HepG2 (cell line): ENCODE measurements at regions of chr4 and their contacts with region 1.

Region 1: GRCh38 chr4:25743971-25744370 is 88.3 kb downstream of the SLC34A2 start:
- DNase-seq: no peak
- ATAC-seq: no peak
- H3K4me3 ChIP-seq: no peak overlapping the region
- H3K27ac ChIP-seq: no peak overlapping the region
- H3K4me1 ChIP-seq: no peaks in the 10 kb centered on the region
- H3K27me3 ChIP-seq: no peaks in the 10 kb centered on the region; a peak in 1 of 5 replicates
- CTCF ChIP-seq: no peak
- EP300 ChIP-seq: no peak
- POLR2A ChIP-seq: no peak
- RAD21 ChIP-seq: no peak

Region 2: DNA sequence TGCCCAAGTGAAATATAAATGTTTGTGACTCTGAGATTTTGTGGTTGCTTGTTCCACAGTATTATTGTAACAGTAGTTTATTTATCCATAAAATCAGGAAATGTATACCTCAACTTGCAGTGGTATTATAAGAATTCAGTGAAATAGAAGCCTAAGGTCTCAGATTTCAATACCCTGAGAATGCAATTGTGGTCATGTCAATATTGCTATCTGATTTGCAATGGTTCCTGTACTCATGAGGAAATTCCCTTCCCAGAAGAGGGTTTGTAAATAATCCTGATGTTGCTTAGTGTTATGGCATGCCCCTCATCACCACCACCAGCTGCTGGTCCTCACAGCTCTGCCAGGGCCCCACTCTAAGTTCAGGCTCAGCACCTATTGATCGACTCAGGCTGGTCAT is 20.6 kb before region 1 on chr4:
- CTCF ChIA-PET with region 1: no interaction called
- POLR2A ChIA-PET with region 1: no interaction called
- in situ Hi-C with region 1: no loop called
- intact Hi-C with region 1: no loop called
- DNase-seq: no peak
- ATAC-seq: peak; percentile 47; the same call in 1 of the 3 replicates
- H3K4me3 ChIP-seq: no peak overlapping the region
- H3K27ac ChIP-seq: no peak overlapping the region
- H3K4me1 ChIP-seq: no peaks in the 10 kb centered on the region
- H3K27me3 ChIP-seq: no peaks in the 10 kb centered on the region
- CTCF ChIP-seq: no peak
- EP300 ChIP-seq: no peak
- POLR2A ChIP-seq: no peak
- RAD21 ChIP-seq: no peak

Region 3: DNA sequence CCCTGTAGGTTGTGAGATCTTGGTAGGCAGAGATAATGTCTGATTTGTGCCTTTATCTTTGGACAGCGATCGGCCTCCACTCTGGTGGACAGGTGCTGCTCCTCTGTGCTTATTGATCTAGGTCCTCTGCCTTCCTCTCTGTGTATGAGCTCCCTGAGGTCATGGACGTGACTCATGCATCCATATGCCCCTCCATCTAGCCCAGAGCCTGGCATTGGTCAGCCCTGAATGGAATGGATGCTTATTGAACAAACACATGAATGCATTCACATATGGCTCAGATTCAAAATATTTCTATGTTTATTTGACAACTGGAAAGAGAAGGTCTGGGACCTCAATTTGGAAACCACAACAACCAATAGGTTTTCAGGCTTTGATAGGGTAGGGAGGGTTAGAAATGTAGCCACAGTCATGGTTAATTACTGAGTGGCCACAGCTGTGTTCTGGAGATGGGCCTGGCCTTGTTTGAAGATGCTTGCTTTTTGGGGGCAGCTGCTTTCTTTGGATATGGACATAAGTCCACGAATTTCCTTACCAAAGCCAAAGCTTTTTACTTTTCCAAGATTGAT is 42.6 kb after region 1 on chr4:
- CTCF ChIA-PET with region 1: no interaction called
- POLR2A ChIA-PET with region 1: no interaction called
- in situ Hi-C with region 1: no loop called
- intact Hi-C with region 1: loop called (anchors 2 kb)
- DNase-seq: no peak
- ATAC-seq: no peak
- H3K4me3 ChIP-seq: no peak overlapping the region
- H3K27ac ChIP-seq: no peak overlapping the region
- H3K4me1 ChIP-seq: no peaks in the 10 kb centered on the region
- H3K27me3 ChIP-seq: no peaks in the 10 kb centered on the region
- CTCF ChIP-seq: no peak
- EP300 ChIP-seq: no peak
- POLR2A ChIP-seq: no peak
- RAD21 ChIP-seq: no peak